Calu3 (cell line): ENCODE measurements at regions of chr16 and their contacts with region 1.

Region 1: GRCh38 chr16:86563489-86564345 is 2.9 kb upstream of the FOXC2 start:
- DNase-seq: peak; percentile 94
- H3K4me3 Mint-ChIP-seq: peak overlapping the region; percentile 56
- H3K27ac Mint-ChIP-seq: no peak overlapping the region
- H3K4me1 Mint-ChIP-seq: peaks cover 17% of the 10 kb centered on the region
- H3K27me3 Mint-ChIP-seq: peaks cover 40% of the 10 kb centered on the region
- CTCF ChIP-seq: peak; percentile 100

Region 2: GRCh38 chr16:86618811-86619794 is 55.4 kb after region 1 on chr16:
- CTCF ChIA-PET with region 1: no interaction called
- intact Hi-C with region 1: no loop called
- DNase-seq: no peak
- H3K4me3 Mint-ChIP-seq: no peak overlapping the region
- H3K27ac Mint-ChIP-seq: no peak overlapping the region
- H3K4me1 Mint-ChIP-seq: no peaks in the 10 kb centered on the region
- H3K27me3 Mint-ChIP-seq: no peaks in the 10 kb centered on the region
- CTCF ChIP-seq: no peak

Region 3: GRCh38 chr16:86834451-86835035 is 270.8 kb after region 1 on chr16:
- CTCF ChIA-PET with region 1: interaction called, 14 read pairs
- intact Hi-C with region 1: loop called (anchors 1 kb)
- DNase-seq: peak; percentile 70
- H3K4me3 Mint-ChIP-seq: no peak overlapping the region
- H3K27ac Mint-ChIP-seq: no peak overlapping the region
- H3K4me1 Mint-ChIP-seq: peaks cover 11% of the 10 kb centered on the region
- H3K27me3 Mint-ChIP-seq: peaks cover 17% of the 10 kb centered on the region
- CTCF ChIP-seq: peak; percentile 64

Region 4: DNA sequence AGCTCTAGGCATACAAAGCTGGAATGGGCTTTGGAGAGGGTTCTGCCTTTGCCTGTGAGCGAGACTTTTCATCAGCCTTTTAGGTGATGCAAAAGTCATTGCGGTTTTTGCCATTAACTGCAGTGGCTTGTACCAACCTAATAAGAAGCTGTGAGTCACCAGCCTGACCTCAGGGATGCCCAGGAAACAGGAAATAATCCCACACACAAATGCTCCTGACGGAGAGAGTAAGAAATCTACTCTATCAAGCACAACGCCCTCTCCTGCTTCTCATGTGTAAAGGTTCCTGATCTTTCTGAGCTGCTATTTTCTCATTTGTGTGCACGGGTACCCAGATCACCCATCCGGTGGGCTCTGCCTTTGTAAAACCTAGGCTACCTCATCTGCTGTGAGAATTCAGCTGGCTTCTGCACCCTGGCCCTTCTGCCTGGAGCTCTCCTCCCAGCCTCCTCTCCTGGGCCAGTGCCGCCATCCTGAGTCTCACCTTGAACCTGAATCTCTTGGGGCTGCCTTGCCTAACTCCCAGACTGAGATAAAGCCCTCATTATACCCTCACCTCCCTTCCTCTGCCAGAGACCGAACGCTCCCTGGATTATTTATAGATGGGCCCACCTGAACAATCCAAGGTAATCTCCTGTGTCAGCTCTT is 453.8 kb after region 1 on chr16:
- CTCF ChIA-PET with region 1: interaction called, 6 read pairs
- intact Hi-C with region 1: loop called (anchors 1 kb)
- DNase-seq: peak; percentile 77
- H3K4me3 Mint-ChIP-seq: no peak overlapping the region
- H3K27ac Mint-ChIP-seq: no peak overlapping the region
- H3K4me1 Mint-ChIP-seq: peaks cover 8% of the 10 kb centered on the region
- H3K27me3 Mint-ChIP-seq: peaks cover 36% of the 10 kb centered on the region
- CTCF ChIP-seq: peak; percentile 43

Region 5: GRCh38 chr16:87076950-87077749 is 513.4 kb after region 1 on chr16:
- CTCF ChIA-PET with region 1: interaction called, 6 read pairs
- intact Hi-C with region 1: loop called (anchors 5 kb)
- DNase-seq: peak; percentile 93
- H3K4me3 Mint-ChIP-seq: no peak overlapping the region
- H3K27ac Mint-ChIP-seq: no peak overlapping the region
- H3K4me1 Mint-ChIP-seq: peaks cover 12% of the 10 kb centered on the region
- H3K27me3 Mint-ChIP-seq: peaks cover 73% of the 10 kb centered on the region
- CTCF ChIP-seq: peak; percentile 84

Region 6: DNA sequence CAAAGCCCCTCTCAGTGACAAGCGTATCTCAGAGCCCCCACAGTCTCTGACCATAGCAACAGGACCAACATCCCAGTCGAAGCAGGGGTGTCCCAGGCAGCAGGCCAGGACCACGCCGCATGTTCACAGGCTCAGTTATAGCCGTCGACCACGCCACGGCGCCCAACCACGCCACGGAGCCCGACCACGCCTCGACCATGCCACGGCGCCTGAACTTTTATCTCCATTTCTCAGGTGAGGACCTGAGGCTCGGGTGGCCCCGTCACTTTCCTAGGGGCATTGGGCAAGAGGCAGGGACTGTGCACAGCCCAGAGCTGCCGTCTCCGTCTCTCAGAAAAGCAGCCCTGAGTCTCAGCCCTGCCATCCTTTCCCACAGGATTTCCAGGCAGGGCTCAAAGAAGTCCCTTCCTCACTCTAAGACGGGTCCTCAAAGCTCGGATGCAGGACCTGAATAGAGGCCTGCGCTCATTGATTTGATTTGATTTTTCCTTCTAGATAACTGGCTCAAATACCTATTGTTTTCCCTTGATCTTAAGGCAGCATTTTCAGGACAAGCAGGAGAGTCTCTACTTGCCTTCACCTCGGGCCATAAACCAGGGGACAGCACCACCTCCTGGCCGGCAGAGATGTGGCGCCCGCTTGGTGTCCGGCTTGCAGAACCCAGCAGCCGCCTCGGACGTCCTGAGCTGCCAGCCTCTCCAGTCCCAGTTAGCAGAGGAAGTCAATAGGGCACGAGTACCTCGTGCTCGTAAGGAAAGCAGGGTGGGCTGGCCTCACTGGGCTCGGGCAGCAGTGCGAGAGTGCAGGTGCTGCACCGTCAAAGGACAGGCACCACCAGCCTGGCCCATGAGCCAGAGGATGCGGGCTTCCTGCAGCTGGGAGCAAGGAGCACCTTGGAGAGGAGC is 714.7 kb after region 1 on chr16:
- CTCF ChIA-PET with region 1: interaction called, 5 read pairs
- intact Hi-C with region 1: loop called (anchors 2 kb)
- DNase-seq: peak; percentile 90
- H3K4me3 Mint-ChIP-seq: peak overlapping the region; percentile 57
- H3K27ac Mint-ChIP-seq: no peak overlapping the region
- H3K4me1 Mint-ChIP-seq: peaks cover 13% of the 10 kb centered on the region
- H3K27me3 Mint-ChIP-seq: peaks cover 66% of the 10 kb centered on the region
- CTCF ChIP-seq: peak; percentile 93